ENCODE measurements at regions of chr13 and their contacts with region 1.

Region 1: DNA sequence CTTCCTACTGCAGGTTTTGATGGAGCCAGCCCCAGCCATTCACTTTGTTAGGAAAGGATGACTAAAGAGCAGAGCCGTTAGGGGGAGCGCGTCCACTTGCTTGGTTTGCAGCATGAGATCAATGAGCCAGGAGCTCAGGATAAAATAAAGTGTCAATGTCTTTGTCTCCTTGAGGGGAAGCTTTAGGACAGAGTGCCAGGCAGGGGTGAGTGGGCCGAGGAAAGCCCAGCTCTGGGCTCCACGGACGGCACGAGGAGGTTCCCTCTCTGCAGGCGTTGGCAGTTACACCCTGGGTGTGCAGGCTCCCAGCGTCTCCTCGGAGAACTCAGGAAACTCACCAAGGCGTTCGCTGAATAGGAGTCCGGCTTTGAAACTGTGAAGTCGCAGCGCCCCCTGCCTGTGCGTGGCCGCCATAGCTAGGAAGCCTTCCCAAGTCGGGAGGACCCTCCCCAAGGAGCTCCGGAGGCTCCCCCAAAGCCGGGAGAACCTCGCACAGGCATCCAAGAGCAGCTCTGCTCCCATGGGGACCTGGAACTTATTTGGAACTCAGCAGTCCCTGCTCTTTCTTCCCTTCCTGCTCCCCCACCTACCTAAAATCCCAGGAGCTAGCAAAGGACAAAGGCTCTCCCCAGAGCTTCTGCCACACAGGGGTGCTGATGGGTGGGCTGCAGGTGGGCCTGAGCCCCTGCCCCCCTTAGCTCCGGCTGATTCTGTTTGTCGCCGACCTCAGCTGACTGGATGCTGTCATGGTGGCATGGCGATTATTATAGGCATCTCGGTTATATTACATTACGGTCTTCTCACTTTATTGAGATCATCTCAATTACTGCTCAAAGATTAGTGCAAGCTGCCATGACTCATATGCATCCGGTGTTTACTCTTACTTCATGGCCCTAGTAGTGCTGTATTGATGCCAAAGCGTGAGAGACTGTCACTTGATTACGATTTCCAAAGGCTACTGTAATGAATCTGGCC is 34.4 kb downstream of the GSX1 start:
- DNase-seq: peak; percentile 66 to 86
- ATAC-seq: peak; percentile 95
- H3K4me3 ChIP-seq: peak overlapping the region; percentile 34
- H3K27ac ChIP-seq: peak overlapping the region; percentile 36 to 68; a peak in 2 of 6 replicates
- H3K4me1 ChIP-seq: no peaks in the 10 kb centered on the region
- CTCF ChIP-seq: peak; percentile 79
- EP300 ChIP-seq: no peak
- POLR2A ChIP-seq: no peak
- RAD21 ChIP-seq: peak; percentile 79 to 85

Region 2: DNA sequence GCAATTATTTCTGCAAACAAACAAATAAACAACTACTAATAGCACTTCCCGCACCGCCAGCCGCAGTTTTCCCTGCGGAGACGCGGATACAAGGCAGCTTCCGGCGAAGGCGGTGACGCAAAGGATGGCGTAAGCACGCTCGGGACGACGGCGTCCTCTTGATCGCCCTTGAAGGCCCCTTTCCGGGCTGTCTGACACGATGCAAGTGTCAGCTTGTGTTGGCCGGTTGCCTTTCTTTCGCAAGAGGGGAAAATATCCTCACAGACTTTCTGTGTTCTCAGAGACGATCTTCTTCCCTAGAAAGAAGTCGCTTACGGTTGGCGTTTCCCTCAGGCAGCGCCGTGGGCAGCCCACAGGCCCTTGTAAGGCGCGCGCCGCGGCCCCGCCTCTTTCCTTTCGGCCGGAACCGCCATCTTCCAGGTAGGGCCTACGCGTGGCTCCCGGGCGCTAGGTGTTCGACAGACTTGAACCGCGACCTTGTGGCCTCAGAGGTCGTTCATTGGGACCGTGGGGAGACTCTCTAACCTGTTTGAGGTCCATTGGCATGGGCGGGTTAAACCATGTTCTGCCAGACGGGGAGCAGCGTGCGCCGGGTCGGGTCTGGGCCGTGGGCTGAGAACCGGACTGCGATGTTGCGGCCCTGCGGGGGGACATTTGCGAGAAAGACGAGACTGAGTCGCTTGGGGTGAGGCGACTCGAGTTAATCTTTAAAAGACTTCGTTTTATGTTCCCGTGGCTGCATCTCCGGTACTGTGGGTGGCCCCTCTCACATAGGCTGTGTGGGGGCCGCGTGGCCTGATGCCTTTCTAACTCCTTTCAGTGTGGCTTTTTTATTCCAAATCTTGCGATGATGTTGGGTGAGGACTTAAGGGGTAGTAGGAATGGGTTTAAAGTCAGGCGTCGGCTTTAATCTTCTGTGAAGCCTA is 575.2 kb before region 1 on chr13 and contains the start of gene RPL21:
- CTCF ChIA-PET with region 1: no interaction called
- POLR2A ChIA-PET with region 1: no interaction called
- DNase-seq: peak; percentile 66 to 97
- ATAC-seq: peak; percentile 97 to 98
- H3K4me3 ChIP-seq: peak within 1 kb of the TSS; percentile 99
- H3K27ac ChIP-seq: peak within 1 kb of the TSS; percentile 97 to 98
- H3K4me1 ChIP-seq: peaks cover 37% of the 10 kb centered on the region; the same call in 2 of the 3 replicates
- CTCF ChIP-seq: no peak
- EP300 ChIP-seq: no peak
- POLR2A ChIP-seq: peak; percentile 51
- RAD21 ChIP-seq: no peak; a peak in 1 of 5 replicates
- polyA plus RNA-seq, gene RPL21: 1,202 and 1,438 TPM in 2 replicates

Region 3: DNA sequence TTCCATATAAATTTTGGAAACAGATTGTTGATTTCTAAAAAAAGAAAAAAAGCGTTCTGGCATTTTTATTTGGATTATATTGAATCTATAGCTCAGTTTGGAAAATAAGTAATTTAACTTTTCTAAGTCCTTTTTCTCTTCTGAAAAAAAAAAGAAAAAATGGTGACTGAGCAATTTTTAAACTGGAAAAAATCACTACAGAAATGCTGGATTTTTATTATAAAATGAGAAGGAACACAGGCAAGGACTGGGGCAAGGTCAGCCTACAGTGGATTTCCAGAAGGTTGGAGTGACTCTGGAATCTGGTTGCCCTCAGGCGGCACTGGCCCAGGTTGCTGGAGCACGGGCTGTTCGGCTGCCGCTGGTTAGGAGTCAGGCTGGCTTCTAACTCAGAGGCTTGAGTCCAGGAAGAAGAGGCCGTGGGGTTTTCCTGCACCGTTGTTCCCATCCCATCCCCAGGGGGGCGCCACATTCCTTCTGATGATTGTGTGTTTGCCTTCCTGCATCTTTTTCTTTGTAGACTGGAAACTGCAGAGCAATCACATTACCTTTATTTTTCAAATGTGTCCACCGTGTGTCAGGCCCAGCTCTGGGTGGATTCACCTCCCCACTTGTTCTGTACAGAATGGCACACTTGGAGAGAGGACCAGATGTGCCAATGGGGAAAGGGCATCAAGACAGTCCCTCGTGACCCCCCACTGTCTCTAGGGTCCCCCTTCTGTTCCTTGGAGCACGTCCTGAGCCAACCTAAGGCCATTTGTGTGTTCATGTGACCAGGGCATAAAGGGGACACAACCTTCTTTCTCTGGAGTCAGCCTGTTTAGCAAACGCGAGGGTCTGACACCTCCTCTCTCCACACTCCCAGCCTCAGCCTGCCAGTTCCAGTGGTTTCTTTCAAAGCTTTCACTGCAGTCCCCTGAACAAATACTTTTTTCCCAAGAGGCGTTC is 446.7 kb before region 1 on chr13:
- CTCF ChIA-PET with region 1: interaction called, 88 read pairs
- POLR2A ChIA-PET with region 1: no interaction called
- DNase-seq: peak; percentile 35 to 67
- ATAC-seq: peak; percentile 25 to 62; a peak in 3 of 6 replicates
- H3K4me3 ChIP-seq: no peak overlapping the region
- H3K27ac ChIP-seq: peak overlapping the region; percentile 3 to 63; a peak in 1 of 6 replicates
- H3K4me1 ChIP-seq: 0 out of 3 replicates have a peak, but pooled peaks cover 8% of the 10 kb centered on the region
- CTCF ChIP-seq: peak; percentile 42
- EP300 ChIP-seq: no peak
- POLR2A ChIP-seq: no peak
- RAD21 ChIP-seq: peak; percentile 36 to 58; a peak in 3 of 5 replicates

Region 4: DNA sequence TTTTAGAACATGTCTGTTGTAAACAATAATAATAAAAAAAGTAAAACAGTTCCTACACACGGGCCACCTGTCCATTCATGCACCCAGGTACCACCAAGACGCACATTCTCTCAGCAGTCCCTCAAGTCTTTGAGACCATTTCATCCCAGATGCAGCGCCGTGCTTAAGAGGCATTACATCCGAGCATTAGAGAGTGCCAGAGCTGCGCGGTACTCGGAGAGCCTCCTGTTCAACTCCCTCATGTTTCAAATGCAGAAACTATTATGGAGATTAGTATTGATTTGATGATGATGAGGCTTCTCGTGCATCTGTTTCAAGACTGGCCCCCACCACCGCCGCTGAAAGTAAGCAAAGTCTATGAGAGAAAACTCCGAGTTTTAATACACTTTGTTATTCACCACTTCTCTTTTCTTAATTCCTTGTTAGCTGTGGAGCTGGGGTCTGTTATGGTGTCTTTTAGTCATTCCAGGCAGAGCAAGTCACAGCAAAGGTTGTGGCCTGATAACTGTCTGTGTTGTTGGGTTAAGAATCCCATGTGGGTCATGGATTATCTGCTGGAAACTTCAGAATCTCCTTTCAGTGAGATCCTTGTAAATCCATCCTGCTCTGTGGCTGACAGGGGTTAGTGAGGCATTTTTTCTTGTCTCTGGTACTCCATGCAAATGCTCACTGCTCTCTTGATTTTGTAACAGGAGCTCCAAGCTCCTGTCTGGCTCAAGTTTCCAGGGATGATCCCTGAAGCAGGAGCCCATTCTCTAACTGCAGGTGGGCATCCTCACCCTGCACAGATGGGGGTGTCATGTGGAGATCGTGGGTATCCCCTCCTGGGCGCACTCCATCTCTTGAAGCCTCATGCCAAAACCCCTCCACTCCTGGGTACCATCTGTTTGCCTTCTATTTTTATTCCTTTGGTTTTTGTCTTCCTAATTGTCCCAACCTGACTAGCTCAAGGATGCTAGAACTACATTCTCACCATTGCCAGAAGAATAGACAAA is 301.4 kb before region 1 on chr13:
- CTCF ChIA-PET with region 1: interaction called, 32 read pairs
- POLR2A ChIA-PET with region 1: no interaction called
- DNase-seq: no peak
- ATAC-seq: no peak
- H3K4me3 ChIP-seq: no peak overlapping the region
- H3K27ac ChIP-seq: no peak overlapping the region
- H3K4me1 ChIP-seq: no peaks in the 10 kb centered on the region
- CTCF ChIP-seq: no peak
- EP300 ChIP-seq: no peak
- POLR2A ChIP-seq: no peak
- RAD21 ChIP-seq: no peak

Region 5: DNA sequence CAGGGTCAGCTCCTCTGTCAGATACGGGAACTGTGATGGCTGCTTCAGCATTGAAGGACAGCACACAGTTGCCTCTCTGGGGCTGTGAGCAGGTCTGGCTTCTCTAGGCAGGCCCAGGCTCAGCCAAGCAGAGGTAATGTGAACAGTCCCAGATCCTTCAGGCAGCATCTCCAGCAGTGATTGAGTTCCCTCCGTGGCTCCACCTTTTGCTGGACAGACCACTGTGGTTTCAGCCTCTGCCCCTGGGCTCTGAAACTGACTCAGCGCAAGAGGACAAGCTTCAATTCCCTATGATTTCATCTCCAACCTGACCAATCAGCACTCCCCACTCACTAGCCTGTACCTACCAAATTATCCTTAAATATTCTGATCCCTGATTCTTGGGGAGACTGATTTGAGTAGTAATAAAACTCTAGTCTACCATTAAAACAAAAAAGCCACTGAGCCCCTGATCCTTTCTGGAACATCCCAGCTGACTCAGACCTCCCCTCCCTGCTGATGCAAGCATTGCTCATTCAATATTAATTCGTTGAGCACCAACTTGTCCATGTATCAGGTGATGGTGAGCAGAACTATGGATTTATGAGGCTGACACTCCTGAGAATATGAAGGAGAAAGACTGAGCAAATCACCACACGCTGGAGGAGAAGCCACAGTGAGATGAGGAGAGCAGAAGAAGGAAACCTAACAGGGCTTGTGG is 17.7 kb before region 1 on chr13:
- CTCF ChIA-PET with region 1: interaction called, 75 read pairs
- POLR2A ChIA-PET with region 1: no interaction called
- DNase-seq: no peak
- ATAC-seq: no peak
- H3K4me3 ChIP-seq: no peak overlapping the region
- H3K27ac ChIP-seq: no peak overlapping the region
- H3K4me1 ChIP-seq: no peaks in the 10 kb centered on the region
- CTCF ChIP-seq: no peak
- EP300 ChIP-seq: no peak
- POLR2A ChIP-seq: no peak
- RAD21 ChIP-seq: no peak

Region 6: DNA sequence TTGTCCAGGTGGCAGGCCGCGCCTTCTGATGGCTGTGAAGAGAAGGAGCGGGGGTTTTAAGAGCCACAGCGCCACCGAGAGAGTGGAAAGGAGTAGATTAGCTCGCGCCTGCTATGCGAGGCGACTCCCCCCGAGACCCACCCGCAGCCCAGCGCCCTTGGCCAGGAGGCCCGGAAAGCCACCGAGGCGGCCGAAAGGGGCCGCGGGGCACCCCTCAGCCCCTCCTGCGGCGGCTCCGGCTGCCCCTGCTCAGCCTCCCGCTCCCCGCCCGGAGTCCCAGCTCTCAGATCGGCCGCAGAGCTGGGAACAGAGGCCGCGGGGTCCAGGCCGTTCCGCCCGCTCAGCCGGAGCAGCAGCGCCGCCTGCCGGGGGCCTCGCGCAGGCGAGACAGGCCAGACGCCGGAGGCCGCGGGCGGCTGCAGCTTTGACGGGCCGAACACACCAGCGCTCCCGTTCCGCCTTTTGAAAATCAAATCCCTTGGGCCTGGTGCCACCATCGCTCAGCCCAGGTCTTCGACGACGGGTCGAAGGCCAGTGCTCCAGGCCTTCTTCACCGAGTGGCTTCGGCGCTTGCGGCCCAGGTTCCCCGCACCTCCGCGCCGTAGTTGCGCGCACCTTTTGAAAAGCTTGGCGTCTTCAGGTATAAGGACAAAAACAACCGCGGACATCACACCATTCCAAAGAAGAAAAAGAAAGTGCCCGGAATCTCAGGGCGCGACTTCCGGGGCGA is 127.2 kb after region 1 on chr13:
- CTCF ChIA-PET with region 1: interaction called, 132 read pairs
- POLR2A ChIA-PET with region 1: interaction called, 19 read pairs
- DNase-seq: peak; percentile 57 to 82
- ATAC-seq: peak; percentile 94 to 98
- H3K4me3 ChIP-seq: peak overlapping the region; percentile 60
- H3K27ac ChIP-seq: peak overlapping the region; percentile 92 to 99
- H3K4me1 ChIP-seq: 0 out of 3 replicates have a peak, but pooled peaks cover 2% of the 10 kb centered on the region
- CTCF ChIP-seq: peak; percentile 76
- EP300 ChIP-seq: no peak
- POLR2A ChIP-seq: no peak
- RAD21 ChIP-seq: peak; percentile 44 to 76

Region 7: GRCh38 chr13:28138012-28138755 is 311.5 kb after region 1 on chr13 and contains the start of gene PAN3:
- CTCF ChIA-PET with region 1: no interaction called
- POLR2A ChIA-PET with region 1: no interaction called
- DNase-seq: peak; percentile 55 to 85
- ATAC-seq: peak; percentile 75 to 85
- H3K4me3 ChIP-seq: peak within 1 kb of the TSS; percentile 99
- H3K27ac ChIP-seq: peak within 1 kb of the TSS; percentile 96 to 100
- H3K4me1 ChIP-seq: peaks cover 16% of the 10 kb centered on the region; the same call in 2 of the 3 replicates
- CTCF ChIP-seq: no peak
- EP300 ChIP-seq: no peak
- POLR2A ChIP-seq: peak; percentile 64
- RAD21 ChIP-seq: no peak
- polyA plus RNA-seq, gene PAN3: 13.9 and 14.6 TPM in 2 replicates